Activated CD8-positive, alpha-beta T cell treated with anti-CD3 and anti-CD28 coated beads, Interleukin-2, amount 10 ng/mL, durations not matched to agents 7 days and 5 days (primary cell): ENCODE measurements at regions of chr1 and their contacts with region 1.

Region 1: DNA sequence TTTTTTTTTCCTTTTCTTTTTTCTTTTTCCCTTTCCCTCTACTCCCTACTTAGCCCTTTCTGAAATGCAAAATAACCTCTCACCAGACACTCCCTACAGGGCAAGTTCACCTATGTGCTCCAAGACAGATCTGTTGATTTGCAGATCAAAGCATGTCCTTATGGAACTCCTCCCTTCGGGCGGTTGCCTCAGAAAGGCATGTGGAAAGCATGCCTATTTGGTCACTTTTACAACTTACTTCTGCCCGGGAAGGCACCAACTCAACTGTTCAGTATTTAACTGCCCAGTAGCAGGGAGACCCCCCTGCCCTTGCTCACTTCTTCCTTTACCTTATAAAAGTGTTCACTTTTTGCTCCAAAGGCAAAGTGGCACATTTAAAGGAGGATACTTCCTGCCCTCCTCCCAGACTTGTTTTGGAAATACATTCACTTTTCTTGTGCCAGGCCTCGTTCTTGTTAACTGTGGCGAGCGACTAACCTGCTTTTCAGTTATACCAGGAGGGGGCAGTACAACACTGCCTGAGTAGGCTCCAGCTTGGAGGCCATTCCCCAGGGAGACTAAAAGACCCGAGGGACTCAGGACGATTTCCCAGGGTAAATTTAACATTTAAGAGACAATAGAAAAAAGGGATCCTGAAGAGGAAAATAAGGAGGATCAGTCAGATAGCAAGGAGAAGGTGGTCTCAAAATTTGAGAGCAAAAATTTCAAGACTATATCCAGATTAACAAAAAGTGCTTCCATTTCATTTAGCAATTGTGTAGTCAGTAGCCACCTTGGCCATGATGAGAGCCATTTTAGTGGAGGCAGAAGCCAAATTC is 12.3 kb upstream of the SLAMF7 start:
- DNase-seq: peak; percentile 82
- ATAC-seq: peak; percentile 80
- H3K4me3 Mint-ChIP-seq: no peak overlapping the region
- H3K27ac Mint-ChIP-seq: no peak overlapping the region
- H3K4me1 Mint-ChIP-seq: peaks cover 25% of the 10 kb centered on the region
- H3K27me3 Mint-ChIP-seq: no peaks in the 10 kb centered on the region

Region 2: DNA sequence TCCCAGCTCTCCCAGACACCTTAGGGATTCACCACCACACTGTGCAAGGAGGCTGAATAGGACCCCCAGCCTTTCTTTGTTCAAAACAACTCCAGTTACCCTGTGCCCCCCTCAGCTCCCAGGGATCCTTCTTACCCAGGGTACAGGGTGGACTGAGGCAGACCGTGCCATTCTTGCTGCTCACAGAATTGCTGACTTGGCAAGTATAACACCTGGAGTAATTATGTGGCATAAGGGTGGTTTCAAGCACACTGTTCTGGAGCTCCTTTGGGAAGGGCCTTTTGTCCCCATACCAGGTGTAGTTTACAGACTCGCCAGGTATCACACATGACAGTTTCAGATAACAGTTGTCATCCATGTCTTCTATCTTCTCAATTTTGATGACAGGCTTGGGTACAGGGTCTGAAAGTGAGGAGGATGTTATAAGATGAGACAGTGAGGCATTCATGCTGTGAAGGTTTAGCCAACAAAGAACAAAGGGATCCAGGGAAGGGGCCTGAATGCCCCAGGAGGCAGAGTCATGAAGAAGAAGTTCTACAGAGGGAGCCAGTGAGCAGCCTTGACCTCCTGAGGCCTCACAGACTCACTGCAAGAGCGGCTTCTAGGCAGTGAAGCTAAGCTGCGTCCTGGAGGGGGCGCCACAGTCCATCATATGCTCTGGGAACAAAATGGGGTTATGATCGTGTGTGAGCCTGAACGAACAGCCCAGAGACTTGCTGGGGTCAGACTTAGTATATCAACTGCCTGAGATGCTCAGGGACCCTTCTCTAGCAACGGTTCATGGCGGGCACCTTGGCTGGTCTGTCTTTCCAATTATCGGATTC is 45.4 kb before region 1 on chr1:
- CTCF ChIA-PET with region 1: interaction called, 184 read pairs
- POLR2A ChIA-PET with region 1: interaction called, 5 read pairs
- DNase-seq: peak; percentile 93
- ATAC-seq: peak; percentile 78
- H3K4me3 Mint-ChIP-seq: no peak overlapping the region
- H3K27ac Mint-ChIP-seq: peak overlapping the region; percentile 88
- H3K4me1 Mint-ChIP-seq: peaks cover 85% of the 10 kb centered on the region
- H3K27me3 Mint-ChIP-seq: no peaks in the 10 kb centered on the region

Region 3: GRCh38 chr1:160739098-160739511 is 12.4 kb after region 1 on chr1 and contains the start of gene SLAMF7:
- CTCF ChIA-PET with region 1: interaction called, 36 read pairs
- POLR2A ChIA-PET with region 1: interaction called, 3 read pairs
- DNase-seq: peak; percentile 68
- ATAC-seq: peak; percentile 60
- H3K4me3 Mint-ChIP-seq: peak within 1 kb of the TSS; percentile 85
- H3K27ac Mint-ChIP-seq: peak within 1 kb of the TSS; percentile 81
- H3K4me1 Mint-ChIP-seq: peaks cover 69% of the 10 kb centered on the region
- H3K27me3 Mint-ChIP-seq: no peaks in the 10 kb centered on the region
- total RNA-seq, gene SLAMF7: 88.5 to 102 TPM

Region 4: DNA sequence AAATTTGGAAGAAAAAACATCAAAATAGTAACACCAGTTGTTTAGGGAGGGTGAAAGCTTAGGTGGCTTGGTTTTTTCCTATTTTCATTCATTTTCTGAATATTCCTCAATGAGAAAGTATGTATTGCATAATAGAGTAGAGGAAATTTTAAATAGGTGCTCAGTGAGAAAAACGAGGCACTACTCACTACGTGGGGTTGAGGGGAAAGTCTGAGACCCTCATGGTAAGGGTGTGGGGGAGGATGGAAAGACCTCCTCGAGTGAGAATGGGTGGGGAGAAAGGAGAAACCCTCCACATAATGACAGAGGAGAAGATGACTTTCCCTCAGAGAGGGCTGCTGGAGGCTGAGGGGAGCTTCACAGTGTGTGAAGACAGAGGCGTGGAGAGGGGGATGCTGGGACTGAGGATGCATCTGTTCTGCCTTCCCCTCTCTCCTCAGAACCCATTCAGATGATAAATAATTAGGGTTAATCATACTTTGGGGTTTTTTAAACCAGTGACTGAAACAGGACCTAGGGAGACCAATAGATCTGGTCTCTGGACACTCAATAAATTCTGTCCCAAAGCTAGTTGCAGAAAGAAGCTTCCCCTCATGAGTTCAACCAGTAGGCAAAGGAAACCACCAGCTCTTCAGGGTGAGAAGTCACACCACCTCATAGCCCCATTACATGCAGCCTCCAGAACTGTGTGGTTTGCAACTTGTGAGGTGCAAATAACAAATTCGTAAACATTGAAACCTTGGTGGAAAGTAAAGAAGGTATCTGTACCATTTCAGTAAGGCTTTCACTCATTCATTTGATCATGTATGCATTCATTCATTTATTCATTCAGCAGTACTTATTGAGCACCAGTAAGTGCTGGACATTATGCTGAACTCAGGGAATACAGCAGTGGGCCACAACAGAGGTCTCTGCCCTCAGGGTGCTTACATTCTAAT is 29.5 kb after region 1 on chr1:
- CTCF ChIA-PET with region 1: interaction called, 52 read pairs
- POLR2A ChIA-PET with region 1: interaction called, 4 read pairs
- DNase-seq: peak; percentile 74
- ATAC-seq: peak; percentile 82
- H3K4me3 Mint-ChIP-seq: peak overlapping the region; percentile 30
- H3K27ac Mint-ChIP-seq: peak overlapping the region; percentile 93
- H3K4me1 Mint-ChIP-seq: peaks cover 58% of the 10 kb centered on the region
- H3K27me3 Mint-ChIP-seq: no peaks in the 10 kb centered on the region

Region 5: DNA sequence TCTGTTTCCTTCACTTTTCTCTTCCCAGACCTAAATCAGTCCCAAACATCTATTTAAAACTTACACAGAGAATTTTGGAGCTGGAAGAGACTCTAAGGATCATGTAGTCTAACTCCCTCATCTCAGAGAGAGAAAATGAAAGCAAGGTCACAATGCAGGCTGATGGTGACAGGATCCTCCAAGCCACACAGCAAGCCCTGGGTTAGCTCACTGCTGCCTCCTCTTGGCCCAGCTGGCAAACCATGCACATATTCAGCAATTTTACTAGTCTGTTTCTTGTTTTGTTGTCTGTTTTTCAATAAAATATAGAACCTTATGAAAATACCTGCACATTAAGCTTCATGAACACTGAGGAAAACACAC is 41.6 kb after region 1 on chr1:
- CTCF ChIA-PET with region 1: interaction called, 439 read pairs
- POLR2A ChIA-PET with region 1: interaction called, 13 read pairs
- DNase-seq: peak; percentile 93
- ATAC-seq: peak; percentile 93
- H3K4me3 Mint-ChIP-seq: peak overlapping the region; percentile 82
- H3K27ac Mint-ChIP-seq: peak overlapping the region; percentile 95
- H3K4me1 Mint-ChIP-seq: peaks cover 46% of the 10 kb centered on the region
- H3K27me3 Mint-ChIP-seq: no peaks in the 10 kb centered on the region

Region 6: GRCh38 chr1:160795951-160796383 is 69.3 kb after region 1 on chr1 and contains the start of gene LY9:
- CTCF ChIA-PET with region 1: interaction called, 35 read pairs
- POLR2A ChIA-PET with region 1: interaction called, 4 read pairs
- DNase-seq: peak; percentile 89
- ATAC-seq: peak; percentile 85
- H3K4me3 Mint-ChIP-seq: peak within 1 kb of the TSS; percentile 88
- H3K27ac Mint-ChIP-seq: peak within 1 kb of the TSS; percentile 95
- H3K4me1 Mint-ChIP-seq: peaks cover 62% of the 10 kb centered on the region
- H3K27me3 Mint-ChIP-seq: no peaks in the 10 kb centered on the region
- total RNA-seq, gene LY9: 24.7 to 24.9 TPM

Region 7: GRCh38 chr1:161111527-161111926 is 384.8 kb after region 1 on chr1:
- CTCF ChIA-PET with region 1: no interaction called
- POLR2A ChIA-PET with region 1: no interaction called
- DNase-seq: no peak
- ATAC-seq: no peak
- H3K4me3 Mint-ChIP-seq: no peak overlapping the region
- H3K27ac Mint-ChIP-seq: no peak overlapping the region
- H3K4me1 Mint-ChIP-seq: peaks cover 42% of the 10 kb centered on the region
- H3K27me3 Mint-ChIP-seq: no peaks in the 10 kb centered on the region